ENCODE measurements at regions of chr16 and their contacts with region 1.

Region 1: DNA sequence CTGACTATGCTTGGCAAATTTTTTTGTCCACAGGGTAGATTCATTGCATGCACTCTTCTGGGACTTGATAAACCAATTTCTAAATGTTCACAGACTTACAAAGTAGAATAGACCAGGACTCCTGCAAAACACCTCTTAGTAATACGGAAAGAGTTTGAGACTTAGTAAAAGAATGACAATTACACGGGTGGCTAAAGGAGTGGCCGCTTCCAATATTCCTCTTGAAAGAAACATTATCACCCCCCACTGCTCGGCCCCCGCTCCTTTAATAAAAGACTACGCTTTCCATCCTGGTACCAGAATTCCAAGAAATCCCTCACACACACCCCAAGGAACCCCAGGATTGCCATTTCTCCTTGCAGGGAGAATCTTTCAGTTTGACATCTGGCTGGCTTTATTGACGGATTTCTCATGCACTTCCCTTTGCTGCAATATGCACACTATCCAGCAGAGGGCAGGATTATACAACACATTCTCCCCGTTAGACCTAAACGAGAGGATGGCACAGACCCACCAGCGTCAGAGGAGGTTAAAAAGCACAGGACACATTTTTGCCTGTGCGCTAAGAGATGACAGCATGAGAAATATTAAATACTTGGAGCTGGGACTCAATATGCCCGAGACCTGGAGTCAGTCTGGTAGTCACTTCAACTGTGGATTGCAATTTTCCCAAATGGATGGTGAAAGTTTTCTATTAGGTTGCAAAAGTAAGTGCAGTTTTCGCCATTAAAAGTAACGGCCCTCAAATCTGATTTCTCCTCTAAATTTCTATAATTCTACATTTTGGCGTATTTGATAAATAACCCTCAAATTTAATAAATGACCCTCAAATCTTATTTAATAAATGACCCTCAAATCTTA is 46.6 kb upstream of the NUDT7 start:
- DNase-seq: peak; percentile 38 to 44
- H3K4me3 ChIP-seq: no peak overlapping the region
- H3K27ac ChIP-seq: no peak overlapping the region
- H3K4me1 ChIP-seq: no peaks in the 10 kb centered on the region
- H3K27me3 ChIP-seq: peaks cover 26% of the 10 kb centered on the region; the same call in 1 of the 2 replicates
- CTCF ChIP-seq: peak; percentile 92

Region 2: GRCh38 chr16:77951775-77952174 is 276.1 kb after region 1 on chr16:
- CTCF ChIA-PET with region 1: no interaction called
- POLR2A ChIA-PET with region 1: no interaction called
- intact Hi-C with region 1: no loop called
- DNase-seq: no peak
- H3K4me3 ChIP-seq: no peak overlapping the region
- H3K27ac ChIP-seq: no peak overlapping the region
- H3K4me1 ChIP-seq: no peaks in the 10 kb centered on the region
- H3K27me3 ChIP-seq: peaks cover 49% of the 10 kb centered on the region
- CTCF ChIP-seq: peak; percentile 50; the same call in 1 of the 2 replicates

Region 3: DNA sequence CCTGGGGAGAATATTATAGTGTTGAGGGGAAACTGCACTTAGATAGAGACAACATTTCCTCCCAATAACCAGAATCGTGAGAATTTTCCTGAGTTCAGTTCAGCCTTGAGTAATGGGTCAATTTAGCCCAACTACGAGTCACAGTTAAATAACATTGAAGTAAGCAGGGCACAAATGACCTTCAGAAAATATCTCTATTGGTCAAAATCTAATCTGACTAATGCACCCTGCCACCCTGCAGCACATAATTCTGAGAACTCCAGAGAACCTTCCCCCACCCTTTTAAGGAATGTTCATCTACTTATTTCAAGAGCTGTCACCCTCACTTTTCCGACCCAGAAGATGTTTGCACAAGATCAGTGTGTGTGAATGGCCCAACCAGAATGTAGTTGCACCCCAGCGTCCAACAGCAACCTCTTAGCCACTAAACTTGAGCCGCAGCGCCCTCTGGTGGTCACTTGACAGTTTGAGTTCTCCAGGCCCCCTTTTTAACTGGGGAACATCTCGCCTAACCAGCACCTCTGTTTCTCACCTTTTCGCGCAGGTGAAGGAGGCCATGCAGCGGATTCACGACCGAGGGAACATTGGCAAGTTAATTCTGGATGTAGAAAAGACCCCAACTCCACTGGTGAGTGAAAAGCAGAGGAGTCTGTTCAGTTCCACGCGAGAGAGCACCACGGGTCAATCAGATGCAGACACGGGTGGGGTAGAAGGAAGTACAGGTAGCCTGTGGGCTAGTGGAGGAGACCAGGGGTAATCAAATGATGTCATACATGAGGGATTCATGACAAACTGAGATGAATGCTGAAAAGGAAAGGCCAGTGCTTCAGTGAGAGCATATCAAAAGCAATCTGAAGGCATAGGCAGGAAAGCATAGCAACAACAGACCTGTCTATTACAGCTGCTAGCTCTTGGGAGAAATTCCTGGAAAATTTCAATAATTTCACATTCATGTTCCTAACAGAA is 295.9 kb after region 1 on chr16:
- CTCF ChIA-PET with region 1: no interaction called
- POLR2A ChIA-PET with region 1: no interaction called
- intact Hi-C with region 1: loop called (anchors 2 kb)
- DNase-seq: peak in 1 of 2 experiments; percentile 39
- H3K4me3 ChIP-seq: no peak overlapping the region
- H3K27ac ChIP-seq: no peak overlapping the region
- H3K4me1 ChIP-seq: no peaks in the 10 kb centered on the region
- H3K27me3 ChIP-seq: peaks cover 20% of the 10 kb centered on the region
- CTCF ChIP-seq: peak; percentile 82

Region 4: DNA sequence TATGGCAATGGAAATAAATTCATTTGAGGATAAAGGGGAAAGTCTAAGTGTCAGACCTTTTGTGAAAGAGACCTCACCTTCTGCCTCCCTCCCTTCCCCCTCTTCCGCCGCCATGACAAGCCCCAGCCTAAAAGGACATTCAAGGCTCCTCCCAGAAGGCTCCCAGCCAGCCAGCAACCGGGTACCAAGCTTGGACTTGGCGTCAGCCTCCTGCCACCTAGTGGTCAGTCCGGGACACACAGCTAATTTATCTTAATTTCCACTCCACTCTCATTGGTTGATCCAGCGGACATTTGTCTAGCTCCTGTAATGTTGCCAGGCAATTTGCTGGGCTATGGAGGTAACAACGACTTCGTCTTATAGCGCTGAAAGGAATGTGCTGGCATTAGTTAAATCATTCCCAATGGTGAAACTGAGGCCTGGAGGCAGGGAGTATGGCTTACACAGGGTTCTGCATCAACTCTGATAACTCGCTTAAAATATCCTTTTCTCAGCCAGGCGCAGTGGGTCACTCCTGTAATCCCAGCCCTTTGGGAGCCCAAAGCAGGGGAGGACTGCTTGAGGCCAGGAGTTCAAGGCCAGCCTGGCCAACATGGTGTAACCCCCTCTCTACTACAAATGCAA is 327.3 kb after region 1 on chr16:
- CTCF ChIA-PET with region 1: interaction called, 5 read pairs
- POLR2A ChIA-PET with region 1: no interaction called
- intact Hi-C with region 1: loop called (anchors 1 kb)
- DNase-seq: peak; percentile 57 to 63
- H3K4me3 ChIP-seq: no peak overlapping the region
- H3K27ac ChIP-seq: no peak overlapping the region
- H3K4me1 ChIP-seq: no peaks in the 10 kb centered on the region
- H3K27me3 ChIP-seq: peaks cover 15% of the 10 kb centered on the region
- CTCF ChIP-seq: peak; percentile 91

Region 5: GRCh38 chr16:78099372-78100161 is 423.9 kb after region 1 on chr16 and contains the start of gene WWOX:
- CTCF ChIA-PET with region 1: no interaction called
- POLR2A ChIA-PET with region 1: no interaction called
- intact Hi-C with region 1: loop called (anchors 10 kb)
- DNase-seq: peak; percentile 94 to 95
- H3K4me3 ChIP-seq: peak within 1 kb of the TSS; percentile 83
- H3K27ac ChIP-seq: peak within 1 kb of the TSS; percentile 72
- H3K4me1 ChIP-seq: peaks cover 11% of the 10 kb centered on the region
- H3K27me3 ChIP-seq: peaks cover 8% of the 10 kb centered on the region
- CTCF ChIP-seq: peak; percentile 95
- total RNA-seq, gene WWOX: 33.3 and 35.6 TPM in 2 replicates

Measured in PC-9 (cell line).